ENCODE measurements at regions of chr3 and their contacts with region 1.

Region 1: GRCh38 chr3:197511130-197511529 is 44.6 kb downstream of the BDH1 start:
- DNase-seq: no peak
- H3K4me3 ChIP-seq: no peak overlapping the region
- H3K27ac ChIP-seq: peak overlapping the region in 1 of 2 experiments; percentile 68; a peak in 2 of 4 replicates
- H3K4me1 ChIP-seq: peaks cover under 1 to 17% of the 10 kb centered on the region in 2 experiments; a peak in 2 of 4 replicates
- H3K27me3 ChIP-seq: no peaks in the 10 kb centered on the region
- CTCF ChIP-seq: no peak
- EP300 ChIP-seq: no peak
- RAD21 ChIP-seq: no peak

Region 2: GRCh38 chr3:197268294-197268693 is 242.8 kb before region 1 on chr3:
- CTCF ChIA-PET with region 1: interaction called, 12 read pairs
- POLR2A ChIA-PET with region 1: no interaction called
- DNase-seq: no peak
- H3K4me3 ChIP-seq: no peak overlapping the region
- H3K27ac ChIP-seq: no peak overlapping the region
- H3K4me1 ChIP-seq: peaks cover 0 to 4% of the 10 kb centered on the region in 2 experiments; a peak in 2 of 4 replicates
- H3K27me3 ChIP-seq: no peaks in the 10 kb centered on the region
- CTCF ChIP-seq: no peak
- EP300 ChIP-seq: no peak
- RAD21 ChIP-seq: no peak

Region 3: DNA sequence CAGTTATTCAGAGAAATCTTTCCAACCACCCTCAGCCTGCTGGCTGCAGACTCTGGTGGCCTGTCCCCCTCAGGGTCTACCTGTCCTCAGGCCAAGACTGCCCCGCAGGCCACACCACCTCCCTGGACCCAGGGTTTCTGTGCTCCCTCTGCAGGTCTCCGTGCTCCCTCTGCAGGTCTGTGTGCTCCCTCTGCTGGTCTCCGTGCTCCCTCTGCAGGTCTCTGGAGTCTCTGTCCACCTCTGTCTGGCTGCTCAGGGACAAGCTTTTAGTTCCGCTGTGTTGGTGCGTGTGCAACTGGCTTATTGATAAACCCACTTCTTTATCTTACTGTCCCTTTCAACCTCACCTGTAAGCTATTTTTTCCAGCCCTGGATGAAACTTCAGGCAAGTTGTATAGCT is 14.6 kb after region 1 on chr3:
- CTCF ChIA-PET with region 1: interaction called, 17 read pairs
- POLR2A ChIA-PET with region 1: interaction called, 15 read pairs
- DNase-seq: no peak
- H3K4me3 ChIP-seq: no peak overlapping the region
- H3K27ac ChIP-seq: no peak overlapping the region
- H3K4me1 ChIP-seq: peaks cover 4 to 49% of the 10 kb centered on the region in 2 experiments; a peak in 3 of 4 replicates
- H3K27me3 ChIP-seq: no peaks in the 10 kb centered on the region
- CTCF ChIP-seq: peak; percentile 44
- EP300 ChIP-seq: no peak
- RAD21 ChIP-seq: peak; percentile 49

Region 4: GRCh38 chr3:198032039-198032936 is 521.2 kb after region 1 on chr3:
- CTCF ChIA-PET with region 1: no interaction called
- POLR2A ChIA-PET with region 1: no interaction called
- DNase-seq: no peak
- H3K4me3 ChIP-seq: no peak overlapping the region
- H3K27ac ChIP-seq: no peak overlapping the region
- H3K4me1 ChIP-seq: 0 out of 4 replicates have a peak, but pooled peaks cover 0 to 3% of the 10 kb centered on the region in 2 experiments
- H3K27me3 ChIP-seq: no peaks in the 10 kb centered on the region
- CTCF ChIP-seq: no peak
- EP300 ChIP-seq: no peak
- RAD21 ChIP-seq: no peak